ENCODE measurements at regions of chr20 and their contacts with region 1.

Region 1: GRCh38 chr20:41047975-41048305 is 19.3 kb downstream of the TOP1 start:
- DNase-seq: peak in 2 of 9 experiments; percentile 48 to 69
- ATAC-seq: peak; percentile 63
- H3K4me3 ChIP-seq: peak overlapping the region; percentile 34 to 41
- H3K4me3 Mint-ChIP-seq: peak overlapping the region; percentile 79
- H3K27ac ChIP-seq: peak overlapping the region; percentile 9 to 68
- H3K27ac Mint-ChIP-seq: peak overlapping the region; percentile 81
- H3K4me1 ChIP-seq: peaks cover 77% of the 10 kb centered on the region
- H3K4me1 Mint-ChIP-seq: peaks cover 91% of the 10 kb centered on the region
- H3K27me3 ChIP-seq: no peaks in the 10 kb centered on the region
- H3K27me3 Mint-ChIP-seq: no peaks in the 10 kb centered on the region
- CTCF ChIP-seq: no peak

Region 2: DNA sequence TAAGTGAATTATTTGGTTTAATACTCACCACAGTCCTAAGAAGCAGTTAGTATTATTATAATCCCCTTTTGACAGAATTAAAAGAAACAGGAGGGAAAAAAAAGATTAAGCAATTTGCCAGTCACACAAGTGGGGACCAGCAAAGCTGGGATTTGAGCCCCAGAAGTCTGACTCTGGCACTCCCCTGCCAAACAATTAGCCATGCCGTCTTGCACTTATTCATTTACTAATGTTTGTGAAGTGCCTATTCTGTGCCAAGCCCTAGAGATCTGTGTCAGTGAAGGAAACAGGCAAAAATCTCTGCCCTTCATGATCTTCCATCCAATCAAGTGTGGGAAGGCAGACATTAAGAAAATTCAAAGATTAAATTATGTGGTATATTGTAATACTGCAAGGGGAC is 145.3 kb before region 1 on chr20:
- CTCF ChIA-PET with region 1: no interaction called
- POLR2A ChIA-PET with region 1: no interaction called
- intact Hi-C with region 1: no loop called
- DNase-seq: no peak
- ATAC-seq: no peak
- H3K4me3 ChIP-seq: no peak overlapping the region
- H3K4me3 Mint-ChIP-seq: no peak overlapping the region
- H3K27ac ChIP-seq: no peak overlapping the region
- H3K27ac Mint-ChIP-seq: no peak overlapping the region
- H3K4me1 ChIP-seq: no peaks in the 10 kb centered on the region
- H3K4me1 Mint-ChIP-seq: no peaks in the 10 kb centered on the region
- H3K27me3 ChIP-seq: no peaks in the 10 kb centered on the region
- H3K27me3 Mint-ChIP-seq: peaks cover 13% of the 10 kb centered on the region
- CTCF ChIP-seq: no peak

Region 3: GRCh38 chr20:41003143-41003883 is 44.6 kb before region 1 on chr20:
- CTCF ChIA-PET with region 1: no interaction called
- POLR2A ChIA-PET with region 1: no interaction called
- intact Hi-C with region 1: loop called in 1 of 2 experiments (anchors 5 kb)
- DNase-seq: peak; percentile 24 to 86 (median 60)
- ATAC-seq: peak; percentile 89
- H3K4me3 ChIP-seq: peak overlapping the region; percentile 26 to 40
- H3K4me3 Mint-ChIP-seq: peak overlapping the region; percentile 76
- H3K27ac ChIP-seq: peak overlapping the region; percentile 58 to 86
- H3K27ac Mint-ChIP-seq: peak overlapping the region; percentile 92
- H3K4me1 ChIP-seq: peaks cover 14% of the 10 kb centered on the region
- H3K4me1 Mint-ChIP-seq: peaks cover 21% of the 10 kb centered on the region
- H3K27me3 ChIP-seq: no peaks in the 10 kb centered on the region
- H3K27me3 Mint-ChIP-seq: no peaks in the 10 kb centered on the region
- CTCF ChIP-seq: no peak

Region 4: DNA sequence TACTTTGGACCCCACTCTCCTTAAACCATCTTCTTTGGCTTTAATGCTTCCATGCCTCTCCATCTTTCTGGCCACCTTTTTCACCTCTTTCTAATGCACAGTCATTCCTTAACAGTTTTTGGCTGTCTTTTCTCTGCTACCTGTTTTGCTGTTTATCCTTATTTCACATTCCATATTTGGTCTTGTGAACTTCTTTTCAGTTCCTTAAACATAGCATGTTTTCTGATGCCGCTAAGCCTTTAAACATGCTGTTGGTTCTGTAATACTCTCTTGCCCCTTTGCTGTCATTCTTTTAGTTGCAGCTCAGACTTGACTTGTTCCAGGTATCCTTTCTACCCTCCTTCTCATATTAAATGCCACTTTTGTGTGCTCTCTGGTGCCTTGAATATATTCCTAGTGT is 16.4 kb after region 1 on chr20:
- CTCF ChIA-PET with region 1: no interaction called
- POLR2A ChIA-PET with region 1: no interaction called
- intact Hi-C with region 1: no loop called
- DNase-seq: no peak
- ATAC-seq: no peak
- H3K4me3 ChIP-seq: no peak overlapping the region
- H3K4me3 Mint-ChIP-seq: no peak overlapping the region
- H3K27ac ChIP-seq: no peak overlapping the region
- H3K27ac Mint-ChIP-seq: no peak overlapping the region
- H3K4me1 ChIP-seq: no peaks in the 10 kb centered on the region
- H3K4me1 Mint-ChIP-seq: peaks cover 64% of the 10 kb centered on the region
- H3K27me3 ChIP-seq: no peaks in the 10 kb centered on the region
- H3K27me3 Mint-ChIP-seq: no peaks in the 10 kb centered on the region
- CTCF ChIP-seq: no peak

Region 5: GRCh38 chr20:41078329-41078728 is 30.4 kb after region 1 on chr20:
- CTCF ChIA-PET with region 1: interaction called, 3 read pairs
- POLR2A ChIA-PET with region 1: interaction called, 3 read pairs
- intact Hi-C with region 1: loop called in 1 of 2 experiments (anchors 5 kb)
- DNase-seq: peak in 2 of 9 experiments; percentile 30 to 52
- ATAC-seq: peak; percentile 46
- H3K4me3 ChIP-seq: no peak overlapping the region
- H3K4me3 Mint-ChIP-seq: peak overlapping the region; percentile 43
- H3K27ac ChIP-seq: no peak overlapping the region
- H3K27ac Mint-ChIP-seq: peak overlapping the region; percentile 71
- H3K4me1 ChIP-seq: peaks cover 28% of the 10 kb centered on the region
- H3K4me1 Mint-ChIP-seq: peaks cover 65% of the 10 kb centered on the region
- H3K27me3 ChIP-seq: no peaks in the 10 kb centered on the region
- H3K27me3 Mint-ChIP-seq: no peaks in the 10 kb centered on the region
- CTCF ChIP-seq: no peak